ENCODE measurements at regions of chr10 and their contacts with region 1.

Region 1: DNA sequence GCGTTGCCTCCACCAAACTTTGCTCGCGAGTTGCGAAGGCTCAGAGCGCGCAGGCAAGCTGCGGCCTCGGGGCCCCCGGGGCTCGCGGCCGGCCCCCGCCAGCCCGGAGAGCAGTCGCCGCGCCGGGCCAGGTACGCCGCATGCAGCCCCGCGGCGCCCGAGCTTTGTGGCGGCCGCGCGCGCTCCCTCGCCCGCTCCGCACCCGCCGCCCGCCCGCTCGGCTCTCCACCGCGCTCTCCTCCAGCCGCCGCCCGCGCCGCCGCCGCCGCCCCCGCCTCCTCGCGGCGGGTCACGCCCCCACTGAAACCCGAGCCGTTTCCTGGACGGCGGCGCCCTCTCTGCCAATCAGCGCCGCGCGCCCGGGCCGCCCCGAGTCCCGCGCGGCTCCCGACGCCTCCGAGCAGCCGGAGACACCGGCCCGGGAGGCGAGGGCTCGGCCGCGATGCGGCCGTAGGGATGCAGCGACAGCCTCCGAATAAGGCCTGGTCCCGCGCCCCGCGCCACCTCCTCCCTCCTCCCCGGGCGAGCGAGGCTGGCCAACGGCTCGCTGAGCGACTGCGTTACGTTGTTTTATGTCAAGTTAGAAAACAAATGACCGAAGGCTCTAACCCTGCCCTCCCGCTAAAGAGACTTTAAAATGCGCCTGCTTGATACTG is at the start of gene FGFR2:
- DNase-seq: peak; percentile 56
- ATAC-seq: peak; percentile 96
- H3K4me3 ChIP-seq: peak within 1 kb of the TSS; percentile 76 to 78
- H3K27ac ChIP-seq: peak within 1 kb of the TSS; percentile 65
- H3K4me1 ChIP-seq: peaks cover 5 to 17% of the 10 kb centered on the region in 2 experiments; a peak in 3 of 4 replicates
- H3K27me3 ChIP-seq: no peaks in the 10 kb centered on the region
- CTCF ChIP-seq: no peak
- POLR2A ChIP-seq: peak; percentile 32
- RAD21 ChIP-seq: no peak
- total RNA-seq, gene FGFR2: 19.7 TPM

Region 2: DNA sequence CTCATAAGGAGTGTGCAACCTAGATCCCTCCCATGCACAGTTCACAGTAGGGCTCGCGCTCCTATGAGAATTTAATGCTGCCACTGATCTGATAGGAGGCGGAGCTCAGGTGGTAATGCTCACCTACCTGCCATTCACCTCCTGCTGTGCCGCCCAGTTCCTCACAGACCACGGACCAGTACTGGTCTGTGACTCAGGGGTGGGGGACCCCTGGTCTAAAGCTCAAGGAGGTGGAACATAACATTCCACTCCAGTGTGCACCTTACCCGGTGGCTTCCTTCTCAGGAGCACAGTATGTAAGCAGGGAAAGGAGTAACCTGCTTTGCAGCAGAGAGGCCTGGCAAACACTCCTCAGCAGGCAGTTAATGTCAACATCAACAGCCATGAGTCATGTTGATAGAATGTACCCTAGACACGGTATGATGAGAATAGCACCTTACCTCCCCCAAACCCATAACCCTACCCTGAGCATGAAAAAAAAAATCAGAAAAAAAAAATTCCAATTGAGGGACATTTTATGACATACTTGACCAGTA is 273.6 kb before region 1 on chr10:
- CTCF ChIA-PET with region 1: no interaction called
- POLR2A ChIA-PET with region 1: no interaction called
- RAD21 ChIA-PET with region 1: no interaction called
- intact Hi-C with region 1: loop called (anchors 5 kb)
- DNase-seq: peak; percentile 75
- ATAC-seq: peak; percentile 81
- H3K4me3 ChIP-seq: peak overlapping the region in 1 of 2 experiments; percentile 43; a peak in 2 of 4 replicates
- H3K27ac ChIP-seq: peak overlapping the region; percentile 53; the same call in 1 of the 2 replicates
- H3K4me1 ChIP-seq: peaks cover 34 to 47% of the 10 kb centered on the region in 2 experiments
- H3K27me3 ChIP-seq: no peaks in the 10 kb centered on the region
- CTCF ChIP-seq: no peak
- POLR2A ChIP-seq: no peak
- RAD21 ChIP-seq: no peak; the same call in 1 of the 2 replicates

Region 3: GRCh38 chr10:122140461-122140902 is 542.1 kb after region 1 on chr10:
- CTCF ChIA-PET with region 1: no interaction called
- POLR2A ChIA-PET with region 1: no interaction called
- RAD21 ChIA-PET with region 1: no interaction called
- intact Hi-C with region 1: no loop called
- DNase-seq: no peak
- ATAC-seq: peak; percentile 50
- H3K4me3 ChIP-seq: peak overlapping the region in 1 of 2 experiments; percentile 44; a peak in 2 of 4 replicates
- H3K27ac ChIP-seq: peak overlapping the region; percentile 71
- H3K4me1 ChIP-seq: peaks cover 31 to 38% of the 10 kb centered on the region in 2 experiments
- H3K27me3 ChIP-seq: no peaks in the 10 kb centered on the region
- CTCF ChIP-seq: peak in 1 of 3 experiments; percentile 26; a peak in 1 of 6 replicates
- POLR2A ChIP-seq: no peak
- RAD21 ChIP-seq: peak; percentile 77